Heart right ventricle (tissue), 16 donors: ENCODE measurements at regions of chr11 and their contacts with region 1.

Region 1: GRCh38 chr11:75667831-75668450 is 897 bp downstream of the MAP6 start:
- DNase-seq: peak; percentile 51 to 59
- ATAC-seq: peak; percentile 23 to 78 (median 52)
- H3K4me3 ChIP-seq: peak overlapping the region; percentile 32 to 85 (median 63)
- H3K27ac ChIP-seq: peak overlapping the region in 8 of 10 donors; percentile 31 to 64 (median 54)
- H3K4me1 ChIP-seq: peaks cover 9 to 19% (median 14%) of the 10 kb centered on the region in 9 donors
- H3K27me3 ChIP-seq: peaks cover 0 to 91% (median 8%) of the 10 kb centered on the region in 7 donors
- CTCF ChIP-seq: no peak

Region 2: GRCh38 chr11:75499449-75500190 is 168.3 kb before region 1 on chr11:
- intact Hi-C with region 1: no loop called
- DNase-seq: no peak
- ATAC-seq: peak in 7 of 8 donors; percentile 20 to 76 (median 56)
- H3K4me3 ChIP-seq: no peak overlapping the region
- H3K27ac ChIP-seq: peak overlapping the region in 3 of 10 donors; percentile 1 to 46 (median 15)
- H3K4me1 ChIP-seq: peaks cover 0 to 22% (median 0%) of the 10 kb centered on the region in 9 donors
- H3K27me3 ChIP-seq: no peaks in the 10 kb centered on the region
- CTCF ChIP-seq: no peak

Region 3: DNA sequence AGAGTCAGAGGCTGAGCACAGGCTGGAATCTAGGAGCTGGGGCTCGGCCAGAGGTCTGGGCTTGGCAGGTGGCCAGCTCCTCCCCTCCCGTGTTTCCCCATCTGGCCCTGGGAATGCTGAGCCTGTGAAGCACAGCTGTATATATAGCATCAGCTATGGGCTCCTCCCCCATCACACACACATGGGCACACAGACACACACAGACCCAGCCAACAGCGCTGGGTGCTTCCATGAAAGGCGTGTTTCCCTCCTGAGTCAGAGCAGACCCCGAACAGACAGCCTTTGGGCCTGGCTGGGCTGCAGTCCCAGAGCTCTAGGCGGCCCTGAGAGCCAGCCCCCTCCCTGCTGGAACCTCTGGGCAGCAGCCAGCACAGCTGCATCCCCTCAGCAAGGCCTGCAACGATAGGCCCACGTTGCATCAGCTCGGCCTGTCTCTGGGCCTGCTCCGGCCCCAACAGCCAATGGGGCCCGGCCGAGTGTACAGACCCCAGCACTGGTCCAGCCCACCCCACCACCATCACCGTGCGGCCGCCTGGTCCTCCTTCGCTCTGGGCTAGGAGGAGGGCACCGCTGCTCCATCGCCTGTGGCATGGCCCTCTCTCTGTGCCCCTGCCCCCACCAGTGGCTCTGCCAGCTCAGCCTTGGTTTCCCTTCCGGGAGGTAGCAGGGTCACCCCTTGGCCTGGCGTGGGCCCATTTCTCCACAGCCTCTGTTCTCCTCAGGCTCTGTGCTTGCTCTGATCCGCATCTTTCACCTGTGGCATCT is 113.5 kb before region 1 on chr11:
- intact Hi-C with region 1: loop called in 3 of 10 experiments (anchors 5 to 10 kb)
- DNase-seq: peak; percentile 93 to 94
- ATAC-seq: peak; percentile 87 to 95 (median 93)
- H3K4me3 ChIP-seq: peak overlapping the region in 7 of 10 donors; percentile 8 to 42 (median 34)
- H3K27ac ChIP-seq: peak overlapping the region; percentile 52 to 98 (median 92)
- H3K4me1 ChIP-seq: peaks cover 13 to 58% (median 47%) of the 10 kb centered on the region in 9 donors
- H3K27me3 ChIP-seq: no peaks in the 10 kb centered on the region
- CTCF ChIP-seq: no peak